Right cardiac atrium (tissue), 5 donors: ENCODE measurements at regions of chr4 and their contacts with region 1.

Region 1: DNA sequence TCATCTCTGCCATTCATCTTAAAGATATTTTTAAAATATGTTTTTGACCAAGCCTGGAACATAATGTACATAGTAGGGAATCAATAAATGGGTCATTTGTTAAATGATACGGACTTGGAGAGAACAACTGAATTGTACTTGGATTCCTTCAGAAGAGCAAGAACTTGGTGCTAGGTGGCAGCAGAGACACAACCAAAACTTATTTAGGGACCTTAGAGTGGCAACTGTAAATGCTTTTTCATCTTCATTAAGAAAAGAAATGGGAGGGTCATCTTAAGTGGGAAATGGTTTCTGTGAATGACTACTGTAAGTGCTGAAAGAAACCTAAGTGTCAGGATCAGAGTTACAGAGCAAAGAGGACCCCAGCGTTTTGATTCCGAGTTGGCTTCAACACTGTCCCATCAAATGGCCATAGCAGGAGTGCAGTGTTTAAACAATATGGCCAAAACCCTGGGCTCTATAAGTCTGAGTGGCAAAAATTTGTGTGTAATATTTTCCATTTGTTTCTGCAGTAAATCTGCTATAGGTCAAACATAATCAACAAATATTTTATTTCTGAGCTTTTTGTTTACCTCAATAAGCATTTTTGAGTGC is 213.6 kb downstream of the PALLD start:
- DNase-seq: peak in 2 of 3 donors; percentile 30 to 69
- ATAC-seq: peak; percentile 64 to 69
- H3K4me3 ChIP-seq: no peak overlapping the region
- H3K27ac ChIP-seq: no peak overlapping the region
- H3K4me1 ChIP-seq: no peaks in the 10 kb centered on the region
- H3K27me3 ChIP-seq: no peaks in the 10 kb centered on the region

Region 2: GRCh38 chr4:168765726-168766125 is 55.3 kb after region 1 on chr4:
- intact Hi-C with region 1: no loop called
- DNase-seq: peak; percentile 66 to 88 (median 78)
- ATAC-seq: peak; percentile 80 to 93
- H3K4me3 ChIP-seq: no peak overlapping the region
- H3K27ac ChIP-seq: peak overlapping the region; percentile 43
- H3K4me1 ChIP-seq: peaks cover 24% of the 10 kb centered on the region
- H3K27me3 ChIP-seq: no peaks in the 10 kb centered on the region

Region 3: GRCh38 chr4:168831919-168832762 is 121.7 kb after region 1 on chr4:
- intact Hi-C with region 1: loop called in 3 of 4 experiments (anchors 5 to 10 kb)
- DNase-seq: peak; percentile 83 to 93 (median 91)
- ATAC-seq: peak; percentile 92 to 94
- H3K4me3 ChIP-seq: peak overlapping the region; percentile 68
- H3K27ac ChIP-seq: peak overlapping the region; percentile 87
- H3K4me1 ChIP-seq: peaks cover 2% of the 10 kb centered on the region
- H3K27me3 ChIP-seq: no peaks in the 10 kb centered on the region